Activated T-helper 1 cell treated with anti-CD3 and anti-CD28 coated beads, Interleukin-12 subunit alpha, Interleukin-12 subunit beta, Interleukin-2, Interleukin-4 antibody, amounts not matched to agents 30 ng/mL and 10 ng/mL and 1 ng/mL, durations not matched to agents 14 hours and 24 hours and 36 hours (primary cell): ENCODE measurements at regions of chr3 and their contacts with region 1.

Region 1: DNA sequence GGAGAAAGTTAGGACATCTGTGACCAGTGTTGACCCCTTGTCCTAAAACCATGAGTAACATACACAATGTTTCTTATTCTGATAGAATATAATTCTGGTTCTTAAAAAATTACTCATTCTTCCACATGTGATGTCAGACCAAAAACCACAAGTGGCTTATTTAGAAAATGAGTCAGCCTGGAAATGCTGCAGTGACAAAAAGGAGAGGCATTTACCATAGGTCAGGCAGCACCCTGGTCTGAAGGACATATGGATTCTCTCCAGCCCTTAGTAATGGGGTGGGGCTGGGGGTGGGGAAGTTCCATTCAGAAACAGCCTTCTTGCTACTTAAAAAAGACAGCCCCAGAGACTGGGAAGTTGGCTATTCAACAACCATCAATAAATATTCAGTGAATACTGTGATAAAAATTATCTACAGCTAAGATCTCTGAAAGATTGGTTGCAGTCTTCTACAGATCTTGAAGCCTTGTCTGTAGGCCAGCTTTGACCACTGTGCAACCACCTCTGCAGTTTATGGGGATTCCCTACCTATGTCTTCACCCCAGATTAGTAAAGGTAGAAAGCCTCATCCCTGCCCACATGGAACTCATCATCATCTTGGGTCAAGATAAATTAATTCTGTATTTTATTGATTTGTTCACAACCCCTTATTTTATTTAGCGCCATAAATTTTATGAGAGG is 34.9 kb upstream of the TIMP4 start:
- DNase-seq: no peak
- H3K4me3 Mint-ChIP-seq: peak overlapping the region; percentile 52
- H3K27ac Mint-ChIP-seq: peak overlapping the region; percentile 93
- H3K4me1 Mint-ChIP-seq: peaks cover 77% of the 10 kb centered on the region
- H3K27me3 Mint-ChIP-seq: no peaks in the 10 kb centered on the region

Region 2: GRCh38 chr3:12175844-12176453 is 17.7 kb before region 1 on chr3:
- intact Hi-C with region 1: loop called (anchors 1 kb)
- DNase-seq: no peak
- H3K4me3 Mint-ChIP-seq: no peak overlapping the region
- H3K27ac Mint-ChIP-seq: no peak overlapping the region
- H3K4me1 Mint-ChIP-seq: peaks cover 48% of the 10 kb centered on the region
- H3K27me3 Mint-ChIP-seq: no peaks in the 10 kb centered on the region

Region 3: DNA sequence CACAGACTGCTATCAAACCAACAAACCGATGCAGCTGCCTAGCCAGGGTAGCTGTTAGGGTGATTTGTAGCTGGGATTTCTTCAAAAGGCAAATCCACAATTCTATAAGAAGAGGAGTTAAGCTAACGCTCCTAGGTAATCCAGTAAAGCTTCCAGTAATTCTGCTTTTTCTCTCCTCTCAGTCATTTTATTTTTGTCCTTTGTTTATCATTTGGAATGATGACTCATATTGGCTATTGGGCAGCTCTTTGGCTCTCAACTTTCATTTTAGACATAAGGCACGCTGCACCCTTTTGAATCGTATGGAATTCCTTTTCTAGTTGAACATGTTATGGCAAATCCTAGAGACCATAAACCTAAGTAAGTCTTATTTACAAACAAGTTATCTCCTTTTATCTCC is 42.1 kb after region 1 on chr3:
- intact Hi-C with region 1: loop called (anchors 1 kb)
- DNase-seq: no peak
- H3K4me3 Mint-ChIP-seq: no peak overlapping the region
- H3K27ac Mint-ChIP-seq: no peak overlapping the region
- H3K4me1 Mint-ChIP-seq: peaks cover 9% of the 10 kb centered on the region
- H3K27me3 Mint-ChIP-seq: peaks cover 9% of the 10 kb centered on the region

Region 4: GRCh38 chr3:12308517-12308916 is 114.9 kb after region 1 on chr3:
- intact Hi-C with region 1: loop called (anchors 1 kb)
- DNase-seq: no peak
- H3K4me3 Mint-ChIP-seq: no peak overlapping the region
- H3K27ac Mint-ChIP-seq: no peak overlapping the region
- H3K4me1 Mint-ChIP-seq: no peaks in the 10 kb centered on the region
- H3K27me3 Mint-ChIP-seq: peaks cover 12% of the 10 kb centered on the region

Region 5: GRCh38 chr3:12336099-12336498 is 142.5 kb after region 1 on chr3:
- intact Hi-C with region 1: loop called (anchors 5 kb)
- DNase-seq: no peak
- H3K4me3 Mint-ChIP-seq: peak overlapping the region; percentile 8
- H3K27ac Mint-ChIP-seq: peak overlapping the region; percentile 3
- H3K4me1 Mint-ChIP-seq: peaks cover 16% of the 10 kb centered on the region
- H3K27me3 Mint-ChIP-seq: peaks cover 2% of the 10 kb centered on the region

Region 6: DNA sequence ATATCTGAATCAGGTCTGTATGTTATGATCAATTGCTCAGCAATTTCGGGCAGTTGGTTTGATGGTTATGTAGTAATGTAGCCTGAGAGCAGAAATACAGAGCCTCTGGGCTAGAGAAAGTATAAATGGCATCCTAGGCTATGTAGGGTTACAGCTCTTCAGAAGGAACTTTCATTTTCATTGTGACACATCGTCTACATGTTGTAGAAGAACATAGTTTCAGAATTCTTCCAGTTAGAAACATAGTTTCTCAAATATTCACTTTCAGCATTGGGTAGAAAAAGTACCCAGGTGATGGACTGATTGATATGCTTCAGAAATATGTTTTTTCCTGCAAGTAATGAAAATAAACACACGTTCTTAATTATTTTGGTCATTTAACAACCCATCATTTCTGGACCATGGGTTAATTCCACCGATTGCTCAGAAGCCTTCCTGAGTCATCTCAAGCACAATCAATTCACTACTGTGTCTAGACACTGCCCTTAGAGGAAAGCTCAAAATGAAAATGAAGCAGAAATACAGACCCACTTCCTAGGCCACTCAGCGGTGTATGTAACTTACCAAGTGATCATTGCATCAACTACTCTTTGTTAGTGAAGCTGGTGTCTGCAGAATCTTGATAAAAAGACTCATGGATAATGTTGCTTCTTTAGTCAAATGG is 201.9 kb after region 1 on chr3:
- intact Hi-C with region 1: loop called (anchors 1 kb)
- DNase-seq: no peak
- H3K4me3 Mint-ChIP-seq: peak overlapping the region; percentile 53
- H3K27ac Mint-ChIP-seq: peak overlapping the region; percentile 62
- H3K4me1 Mint-ChIP-seq: peaks cover 12% of the 10 kb centered on the region
- H3K27me3 Mint-ChIP-seq: peaks cover 19% of the 10 kb centered on the region

Region 7: DNA sequence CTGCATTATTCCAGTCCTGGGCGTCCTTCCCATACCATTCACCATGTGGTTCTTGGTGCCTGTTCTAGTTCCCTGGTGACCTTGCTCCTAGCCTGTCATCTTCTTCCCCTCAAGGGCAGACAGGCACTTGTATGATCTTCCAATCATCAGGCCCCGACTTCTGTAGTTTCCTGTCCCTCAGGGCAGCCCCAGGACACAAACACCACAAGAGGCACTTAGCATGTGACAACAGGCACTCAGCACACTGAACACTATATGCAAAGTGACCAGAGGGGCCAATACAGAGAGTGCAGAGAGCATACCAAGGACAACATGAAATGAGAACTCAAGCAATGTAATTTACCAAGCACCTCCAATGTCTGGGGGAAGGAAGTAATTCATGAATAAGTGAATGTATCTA is 547.6 kb after region 1 on chr3:
- intact Hi-C with region 1: no loop called
- DNase-seq: no peak
- H3K4me3 Mint-ChIP-seq: no peak overlapping the region
- H3K27ac Mint-ChIP-seq: no peak overlapping the region
- H3K4me1 Mint-ChIP-seq: no peaks in the 10 kb centered on the region
- H3K27me3 Mint-ChIP-seq: peaks cover 5% of the 10 kb centered on the region

Region 8: DNA sequence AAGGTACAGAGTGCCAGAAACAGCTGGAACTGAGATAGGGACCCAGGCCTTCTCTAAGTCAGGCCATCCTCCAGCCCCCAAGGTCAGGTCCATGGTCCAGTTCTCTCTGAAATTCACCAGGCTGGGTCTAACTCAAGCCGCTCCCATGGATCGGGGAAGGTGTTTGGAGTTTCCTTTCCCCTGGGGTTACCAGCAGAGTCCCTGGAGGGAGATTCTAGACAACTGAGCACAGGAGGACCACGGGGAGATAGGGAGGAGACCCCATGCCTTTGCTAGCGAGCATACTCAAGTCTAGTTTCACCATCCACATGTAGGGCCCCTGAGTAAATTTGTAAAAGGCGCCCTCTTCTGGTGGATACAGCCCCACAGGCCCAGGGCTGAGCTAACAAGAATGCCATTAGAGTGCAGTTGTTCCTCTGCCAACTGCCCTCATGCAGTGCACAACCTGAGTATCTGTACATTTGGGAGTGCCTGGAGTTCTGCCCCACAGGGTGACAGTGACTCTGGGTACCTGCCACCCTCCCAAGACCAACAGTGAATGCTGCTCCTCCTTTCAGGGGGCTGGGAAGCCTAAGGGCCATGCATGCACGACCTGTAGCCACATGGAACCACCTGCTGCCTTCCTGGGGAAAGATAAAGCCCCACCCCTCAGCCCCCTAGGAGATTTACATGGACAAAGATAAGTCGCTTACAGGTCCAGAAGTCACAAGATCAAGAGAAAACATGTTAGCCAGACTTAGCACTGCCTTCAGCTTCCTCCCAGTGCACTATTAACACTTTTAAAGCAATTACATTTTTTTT is 790.6 kb after region 1 on chr3:
- intact Hi-C with region 1: no loop called
- DNase-seq: peak; percentile 44
- H3K4me3 Mint-ChIP-seq: no peak overlapping the region
- H3K27ac Mint-ChIP-seq: no peak overlapping the region
- H3K4me1 Mint-ChIP-seq: peaks cover 38% of the 10 kb centered on the region
- H3K27me3 Mint-ChIP-seq: no peaks in the 10 kb centered on the region

Region 9: GRCh38 chr3:13012228-13012691 is 818.6 kb after region 1 on chr3:
- intact Hi-C with region 1: loop called (anchors 5 kb)
- DNase-seq: peak; percentile 43
- H3K4me3 Mint-ChIP-seq: peak overlapping the region; percentile 80
- H3K27ac Mint-ChIP-seq: peak overlapping the region; percentile 99
- H3K4me1 Mint-ChIP-seq: peaks cover 85% of the 10 kb centered on the region
- H3K27me3 Mint-ChIP-seq: no peaks in the 10 kb centered on the region